ENCODE measurements at regions of chr1 and their contacts with region 1.

Region 1: DNA sequence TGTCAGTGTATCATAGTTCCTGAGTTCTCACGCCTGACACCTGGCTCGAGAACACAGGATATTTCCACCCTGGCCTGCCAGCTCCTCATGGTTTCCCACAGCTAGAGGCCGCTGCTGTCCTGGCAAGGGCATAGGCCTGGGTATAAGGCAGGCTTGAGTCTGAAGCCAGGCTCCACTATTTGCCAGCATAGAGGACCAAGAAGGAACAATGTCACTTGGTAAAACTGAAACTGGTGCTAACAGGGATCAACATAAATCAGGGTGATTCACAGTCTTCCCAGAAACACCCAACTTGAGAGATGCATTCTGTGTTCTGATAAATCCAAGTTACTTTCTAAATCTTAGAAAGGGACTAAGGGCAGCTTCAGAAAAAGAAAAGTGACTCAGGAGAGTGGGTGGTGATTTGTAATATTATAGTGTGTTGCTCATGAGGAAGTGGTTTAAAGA is 6.9 kb upstream of the S100A2 start:
- DNase-seq: peak; percentile 37
- ATAC-seq: peak; percentile 94
- H3K4me3 ChIP-seq: no peak overlapping the region
- H3K27ac ChIP-seq: no peak overlapping the region
- H3K4me1 ChIP-seq: peaks cover 8% of the 10 kb centered on the region
- H3K27me3 ChIP-seq: no peaks in the 10 kb centered on the region
- CTCF ChIP-seq: peak; percentile 85 to 97 (median 89)
- EP300 ChIP-seq: no peak
- POLR2A ChIP-seq: no peak
- RAD21 ChIP-seq: peak; percentile 92

Region 2: DNA sequence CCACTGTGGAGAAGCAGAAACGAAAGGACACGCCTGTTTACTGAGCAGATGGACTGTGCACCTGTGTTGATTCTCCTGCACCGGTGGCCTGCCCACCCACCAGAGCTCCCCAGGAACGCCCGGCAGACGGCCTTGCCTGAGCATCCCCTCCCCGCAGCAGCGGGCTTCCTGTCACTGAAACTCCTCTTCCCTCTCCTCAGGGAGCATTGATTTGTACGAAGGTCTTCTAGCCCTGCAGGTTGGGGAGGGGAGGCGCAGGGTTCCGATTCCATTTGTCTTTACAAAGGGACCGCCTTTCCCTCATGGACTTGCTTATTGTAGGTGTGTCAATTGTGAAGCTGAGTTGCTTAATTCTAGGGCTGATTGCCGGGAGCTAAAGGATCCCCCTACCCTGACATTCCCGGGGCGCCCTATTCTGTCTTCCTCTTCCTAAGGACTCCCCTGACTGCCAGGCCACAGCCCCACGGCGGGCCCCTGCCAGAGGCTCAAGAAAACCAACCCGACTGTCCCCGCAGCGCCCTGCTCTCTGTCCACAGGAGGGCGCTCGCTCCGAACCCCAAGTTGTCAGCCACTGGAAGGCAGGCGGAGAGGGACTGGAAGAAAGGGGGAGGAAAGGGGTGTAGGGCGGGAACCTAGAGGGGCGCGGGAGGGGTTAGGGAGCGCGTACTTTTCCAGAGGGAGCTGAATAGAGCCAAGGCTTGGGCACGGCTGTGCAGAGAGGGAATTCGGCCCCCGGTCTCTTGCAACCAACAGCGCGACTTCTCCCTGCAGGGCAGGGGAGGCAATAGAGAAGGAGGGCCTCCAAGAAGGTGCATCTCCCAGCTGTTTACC is 39.6 kb before region 1 on chr1:
- CTCF ChIA-PET with region 1: interaction called, 216 read pairs
- POLR2A ChIA-PET with region 1: interaction called, 8 read pairs
- RAD21 ChIA-PET with region 1: interaction called, 74 read pairs
- SMC1A ChIA-PET with region 1: interaction called, 72 read pairs
- in situ Hi-C with region 1: no loop called
- intact Hi-C with region 1: loop called (anchors 5 kb)
- DNase-seq: no peak
- ATAC-seq: peak; percentile 51
- H3K4me3 ChIP-seq: no peak overlapping the region
- H3K27ac ChIP-seq: no peak overlapping the region
- H3K4me1 ChIP-seq: peaks cover 12% of the 10 kb centered on the region
- H3K27me3 ChIP-seq: no peaks in the 10 kb centered on the region
- CTCF ChIP-seq: peak; percentile 73 to 86 (median 73)
- EP300 ChIP-seq: no peak
- POLR2A ChIP-seq: no peak
- RAD21 ChIP-seq: peak; percentile 74

Region 3: GRCh38 chr1:153598309-153599172 is 25.9 kb after region 1 on chr1:
- CTCF ChIA-PET with region 1: interaction called, 9 read pairs
- POLR2A ChIA-PET with region 1: interaction called, 3 read pairs
- RAD21 ChIA-PET with region 1: interaction called, 9 read pairs
- SMC1A ChIA-PET with region 1: interaction called, 12 read pairs
- in situ Hi-C with region 1: no loop called
- intact Hi-C with region 1: no loop called
- DNase-seq: peak; percentile 88
- ATAC-seq: peak; percentile 99
- H3K4me3 ChIP-seq: no peak overlapping the region
- H3K27ac ChIP-seq: peak overlapping the region; percentile 97
- H3K4me1 ChIP-seq: peaks cover 22% of the 10 kb centered on the region
- H3K27me3 ChIP-seq: no peaks in the 10 kb centered on the region
- CTCF ChIP-seq: no peak
- EP300 ChIP-seq: peak; percentile 56 to 64; a peak in 3 of 4 replicates
- POLR2A ChIP-seq: peak; percentile 76
- RAD21 ChIP-seq: 0 out of 2 replicates have a peak, but pooled peaks have one; percentile 13

Region 4: DNA sequence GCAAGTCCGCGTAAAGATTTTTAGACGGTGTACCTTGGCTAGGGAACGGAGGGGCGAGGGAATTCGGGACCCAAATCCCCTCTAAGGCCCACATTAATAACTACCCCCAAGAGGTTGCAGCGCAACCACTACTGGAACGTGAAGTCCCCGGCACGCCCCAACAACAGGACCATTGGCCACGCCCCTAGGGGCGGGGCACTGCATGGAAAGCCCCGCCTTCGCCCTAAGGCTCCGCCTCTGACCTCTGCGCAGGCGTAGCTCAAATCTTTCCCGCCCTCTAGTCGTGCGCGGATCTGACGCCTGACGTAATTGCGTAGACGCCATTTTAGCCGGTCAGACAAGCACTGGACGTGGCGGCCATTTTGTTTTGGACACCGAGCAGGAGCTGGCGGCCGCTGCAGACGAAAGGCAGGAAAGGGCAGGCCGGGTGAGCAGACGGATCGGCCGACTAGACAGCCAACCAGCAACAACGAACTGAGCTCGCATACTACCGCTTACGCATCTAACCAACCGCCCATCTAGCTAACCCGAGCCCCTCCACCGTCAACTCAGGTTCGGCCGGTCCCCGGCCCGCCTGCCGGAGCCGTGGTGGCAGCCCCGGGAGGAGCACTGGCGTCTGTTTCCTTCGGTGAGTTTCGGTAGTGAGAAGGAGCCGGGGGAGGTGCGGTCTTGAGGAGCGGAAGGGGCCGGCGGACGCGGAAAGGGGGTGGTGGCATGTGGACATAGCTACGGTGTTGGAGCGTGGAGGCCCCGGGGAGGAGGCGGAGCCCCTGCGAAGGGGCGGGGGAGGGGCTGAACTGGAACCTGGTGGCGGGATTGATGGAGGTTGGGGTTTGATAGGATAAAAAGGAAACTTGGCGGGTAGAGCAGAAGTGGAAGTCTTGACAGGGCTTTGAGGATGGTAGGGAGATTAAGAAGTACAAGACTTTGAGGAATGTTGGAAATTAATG is 61.4 kb after region 1 on chr1 and contains the start of gene CHTOP:
- CTCF ChIA-PET with region 1: interaction called, 62 read pairs
- POLR2A ChIA-PET with region 1: interaction called, 11 read pairs
- RAD21 ChIA-PET with region 1: interaction called, 25 read pairs
- SMC1A ChIA-PET with region 1: interaction called, 31 read pairs
- in situ Hi-C with region 1: no loop called
- intact Hi-C with region 1: no loop called
- DNase-seq: peak; percentile 95
- ATAC-seq: peak; percentile 96
- H3K4me3 ChIP-seq: peak within 1 kb of the TSS; percentile 89
- H3K27ac ChIP-seq: peak within 1 kb of the TSS; percentile 98
- H3K4me1 ChIP-seq: peaks cover 6% of the 10 kb centered on the region
- H3K27me3 ChIP-seq: no peaks in the 10 kb centered on the region
- CTCF ChIP-seq: no peak
- EP300 ChIP-seq: no peak
- POLR2A ChIP-seq: peak; percentile 98
- RAD21 ChIP-seq: no peak
- polyA plus RNA-seq, gene CHTOP: 8.4 to 15.9 TPM

Region 5: DNA sequence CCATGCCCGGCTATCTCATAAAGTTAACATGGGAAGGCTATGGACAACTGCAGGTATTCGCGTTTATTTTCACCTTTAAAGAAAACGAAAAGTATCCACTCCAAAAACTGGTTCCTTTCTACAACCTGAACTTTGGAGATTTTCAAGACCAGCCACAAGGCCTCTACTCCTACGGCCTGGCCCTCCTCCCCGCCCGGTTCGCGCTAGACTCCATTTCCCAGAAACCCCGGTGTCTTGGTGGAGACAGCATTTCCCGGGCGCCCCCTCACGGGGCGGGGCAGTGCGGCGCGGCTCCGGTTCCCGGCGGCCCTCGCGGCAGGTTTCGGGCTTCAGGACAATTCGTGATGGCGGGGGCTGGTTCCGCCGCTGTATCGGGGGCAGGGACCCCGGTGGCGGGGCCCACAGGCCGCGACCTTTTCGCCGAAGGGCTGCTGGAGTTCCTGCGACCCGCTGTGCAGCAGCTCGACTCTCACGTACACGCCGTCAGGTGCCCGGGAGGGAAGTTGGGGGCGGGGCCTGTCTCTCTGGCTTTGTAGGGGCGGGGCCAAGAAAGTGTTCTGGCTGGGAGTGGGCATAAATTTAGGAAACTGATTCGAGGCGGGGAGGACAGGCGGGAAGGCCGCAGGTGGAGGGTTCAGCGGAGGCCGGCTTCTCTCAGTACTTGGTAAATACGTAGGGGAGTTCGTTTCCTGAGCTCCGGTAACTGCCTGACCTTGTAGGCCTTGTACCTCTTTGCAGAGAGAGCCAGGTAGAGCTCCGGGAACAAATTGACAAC is 86.0 kb after region 1 on chr1 and contains the start of gene SNAPIN:
- CTCF ChIA-PET with region 1: interaction called, 12 read pairs
- POLR2A ChIA-PET with region 1: no interaction called
- RAD21 ChIA-PET with region 1: interaction called, 4 read pairs
- SMC1A ChIA-PET with region 1: interaction called, 24 read pairs
- in situ Hi-C with region 1: no loop called
- intact Hi-C with region 1: no loop called
- DNase-seq: peak; percentile 58
- ATAC-seq: peak; percentile 99
- H3K4me3 ChIP-seq: peak within 1 kb of the TSS; percentile 94
- H3K27ac ChIP-seq: peak within 1 kb of the TSS; percentile 88
- H3K4me1 ChIP-seq: peaks cover 6% of the 10 kb centered on the region; the same call in 1 of the 2 replicates
- H3K27me3 ChIP-seq: no peaks in the 10 kb centered on the region
- CTCF ChIP-seq: no peak
- EP300 ChIP-seq: 0 out of 4 replicates have a peak, but pooled peaks of 1 of the 2 experiments have one; percentile 17
- POLR2A ChIP-seq: peak; percentile 87
- RAD21 ChIP-seq: no peak
- polyA plus RNA-seq, gene SNAPIN: 12.4 to 25.0 TPM

Region 6: DNA sequence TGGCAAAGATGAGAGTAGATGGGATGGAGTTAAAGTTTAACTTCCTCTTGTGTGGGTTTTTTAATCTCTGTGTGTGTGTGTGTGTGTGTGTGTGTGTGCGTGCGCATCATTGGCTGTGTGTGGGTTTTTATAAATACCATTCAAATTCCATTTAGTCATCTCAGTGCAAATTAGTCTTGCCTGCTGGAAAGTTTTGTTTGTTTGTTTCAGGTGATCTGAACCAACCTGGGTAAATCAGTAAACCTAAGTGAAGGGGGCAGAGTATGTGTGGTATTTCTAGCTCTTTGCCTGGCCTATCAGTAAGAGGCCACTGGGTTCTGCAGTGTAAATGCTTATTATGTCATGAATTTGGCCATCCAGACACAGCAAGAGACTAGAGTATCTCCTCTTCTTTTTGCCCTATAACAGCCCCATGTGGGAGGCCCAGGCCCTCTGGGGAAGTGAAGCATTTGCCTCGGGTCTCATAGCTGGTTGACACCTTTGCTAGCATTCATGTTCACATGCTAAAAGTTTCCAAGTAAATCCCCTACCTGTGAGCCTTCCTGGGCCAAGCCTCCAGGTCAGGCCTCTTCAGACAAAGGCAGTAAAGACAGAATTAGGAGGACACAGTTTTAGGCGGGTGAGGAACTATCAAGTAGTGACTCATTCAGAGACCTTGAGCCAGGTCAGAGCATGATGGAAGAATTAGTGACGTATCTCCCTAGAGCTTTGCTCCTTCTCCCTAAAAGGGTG is 170.0 kb after region 1 on chr1:
- CTCF ChIA-PET with region 1: interaction called, 15 read pairs
- POLR2A ChIA-PET with region 1: no interaction called
- RAD21 ChIA-PET with region 1: no interaction called
- SMC1A ChIA-PET with region 1: no interaction called
- in situ Hi-C with region 1: no loop called
- intact Hi-C with region 1: loop called (anchors 5 kb)
- DNase-seq: peak; percentile 80
- ATAC-seq: peak; percentile 87
- H3K4me3 ChIP-seq: peak overlapping the region; percentile 7; the same call in 1 of the 2 replicates
- H3K27ac ChIP-seq: peak overlapping the region; percentile 77
- H3K4me1 ChIP-seq: peaks cover 32% of the 10 kb centered on the region
- H3K27me3 ChIP-seq: no peaks in the 10 kb centered on the region
- CTCF ChIP-seq: no peak
- EP300 ChIP-seq: peak; percentile 67 to 86; a peak in 2 of 4 replicates
- POLR2A ChIP-seq: no peak
- RAD21 ChIP-seq: no peak